Naive thymus-derived CD4-positive, alpha-beta T cell (primary cell): ENCODE measurements at regions of chr10 and their contacts with region 1.

Region 1: DNA sequence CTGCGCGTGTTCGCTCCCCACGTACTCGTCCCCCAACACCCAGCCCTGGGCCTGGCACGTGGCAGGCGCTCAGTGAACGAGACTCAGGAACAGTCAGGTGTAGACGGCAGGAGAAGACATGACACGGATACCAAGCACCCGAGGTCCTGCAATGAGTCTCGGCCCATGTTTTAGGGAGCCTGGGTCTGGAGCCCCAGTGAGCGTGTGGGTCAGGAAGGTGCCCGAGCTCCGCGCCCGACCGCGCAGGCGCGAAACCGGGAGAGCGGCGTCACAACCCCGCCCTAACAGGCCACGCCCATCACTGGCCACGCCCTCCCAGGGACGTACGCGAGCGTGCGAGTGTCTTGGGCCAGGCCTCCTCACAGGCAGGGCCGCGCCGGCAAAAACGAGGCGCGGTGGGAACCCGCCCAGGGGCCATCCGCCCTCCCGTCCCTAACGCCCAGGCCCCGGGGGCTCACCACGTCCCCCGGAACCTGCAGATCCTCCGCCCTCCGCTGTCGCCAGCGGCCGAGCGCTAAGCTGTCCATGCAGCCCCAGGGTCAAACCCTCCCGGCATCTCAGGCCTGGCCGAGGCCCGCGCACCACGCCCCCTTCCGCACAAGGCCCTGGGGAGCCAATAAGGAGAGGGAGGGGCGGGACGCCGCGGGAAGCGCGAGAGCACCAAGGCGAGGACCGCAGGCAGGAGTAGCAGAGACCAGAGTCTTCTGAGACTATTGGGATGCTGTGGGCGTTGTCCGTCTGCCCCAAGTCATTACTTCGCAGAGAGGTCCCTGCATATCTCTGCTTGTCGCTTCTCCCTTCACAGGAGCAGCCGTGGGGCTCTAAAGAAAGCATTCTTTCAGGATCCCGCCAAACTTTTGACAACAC is at the start of gene C10orf143:
- DNase-seq: peak; percentile 96 to 100 (median 99)
- ATAC-seq: peak; percentile 89
- H3K4me3 ChIP-seq: peak within 1 kb of the TSS; percentile 100
- H3K4me3 Mint-ChIP-seq: peak within 1 kb of the TSS; percentile 90 to 99 (median 98)
- H3K27ac ChIP-seq: peak within 1 kb of the TSS; percentile 88
- H3K27ac Mint-ChIP-seq: peak within 1 kb of the TSS; percentile 90 to 99 (median 98)
- H3K4me1 ChIP-seq: peaks cover 19 to 21% of the 10 kb centered on the region in 2 donors
- H3K4me1 Mint-ChIP-seq: peaks cover 27 to 67% (median 53%) of the 10 kb centered on the region in 7 donors
- H3K27me3 ChIP-seq: no peaks in the 10 kb centered on the region
- H3K27me3 Mint-ChIP-seq: no peaks in the 10 kb centered on the region
- total RNA-seq, gene C10orf143: 2.6 to 12.5 (median 10.2) TPM

Region 2: DNA sequence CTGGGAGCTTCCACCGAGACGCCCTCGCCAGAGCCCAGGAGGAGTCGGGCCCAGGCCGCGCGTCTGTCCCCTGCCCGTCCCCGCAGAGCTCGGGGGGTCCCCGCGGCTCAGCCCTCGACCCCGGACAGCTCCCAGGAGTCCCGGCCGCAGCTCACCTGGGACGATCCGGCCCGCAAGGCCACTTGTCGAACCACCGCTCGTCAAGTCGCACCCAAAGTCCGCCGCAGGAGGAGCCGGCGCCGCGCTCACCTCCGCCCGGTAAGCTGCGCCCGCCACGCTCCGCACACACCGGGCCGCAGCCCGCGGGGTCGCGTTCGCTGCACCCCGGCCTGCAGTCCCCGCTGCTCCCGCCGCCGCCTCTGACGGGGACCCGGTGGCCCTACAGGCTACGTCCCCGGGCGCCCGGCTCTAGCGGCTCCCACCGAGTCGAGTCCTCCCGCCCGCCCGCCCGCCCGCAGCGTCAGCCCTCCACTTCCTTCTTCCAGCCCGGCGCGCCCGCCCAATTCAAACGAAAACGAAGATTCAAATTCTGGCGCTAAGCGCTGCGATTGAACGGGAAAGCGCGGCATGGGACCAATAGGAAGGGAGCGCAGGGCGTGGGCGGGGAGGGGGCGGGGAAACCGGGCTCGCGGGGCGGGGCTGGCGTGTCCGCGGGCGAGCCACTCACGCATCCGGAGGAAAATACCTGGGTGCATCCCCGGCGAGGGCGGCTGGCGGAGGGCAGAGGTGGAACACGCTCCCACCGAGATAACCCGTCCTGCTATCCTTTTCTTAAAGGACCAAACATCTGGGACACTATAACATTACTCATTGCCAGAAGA is 1984.3 kb before region 1 on chr10 and contains the start of gene MKI67:
- CTCF ChIA-PET with region 1: no interaction called
- POLR2A ChIA-PET with region 1: no interaction called
- intact Hi-C with region 1: loop called in 1 of 2 experiments (anchors 2 kb)
- DNase-seq: peak; percentile 68 to 88 (median 85)
- ATAC-seq: peak; percentile 98
- H3K4me3 ChIP-seq: peak within 1 kb of the TSS; percentile 82
- H3K4me3 Mint-ChIP-seq: peak within 1 kb of the TSS; percentile 86 to 94 (median 88)
- H3K27ac ChIP-seq: peak within 1 kb of the TSS; percentile 73
- H3K27ac Mint-ChIP-seq: peak within 1 kb of the TSS in 8 of 9 donors; percentile 56 to 97 (median 71)
- H3K4me1 ChIP-seq: peaks cover 9 to 18% of the 10 kb centered on the region in 2 donors
- H3K4me1 Mint-ChIP-seq: peaks cover 6 to 44% (median 19%) of the 10 kb centered on the region in 7 donors
- H3K27me3 ChIP-seq: peaks cover 10 to 11% of the 10 kb centered on the region in 2 donors
- H3K27me3 Mint-ChIP-seq: peaks cover 7 to 37% (median 33%) of the 10 kb centered on the region in 5 donors
- total RNA-seq, gene MKI67: 0.05 to 219 (median 1.6) TPM

Region 3: DNA sequence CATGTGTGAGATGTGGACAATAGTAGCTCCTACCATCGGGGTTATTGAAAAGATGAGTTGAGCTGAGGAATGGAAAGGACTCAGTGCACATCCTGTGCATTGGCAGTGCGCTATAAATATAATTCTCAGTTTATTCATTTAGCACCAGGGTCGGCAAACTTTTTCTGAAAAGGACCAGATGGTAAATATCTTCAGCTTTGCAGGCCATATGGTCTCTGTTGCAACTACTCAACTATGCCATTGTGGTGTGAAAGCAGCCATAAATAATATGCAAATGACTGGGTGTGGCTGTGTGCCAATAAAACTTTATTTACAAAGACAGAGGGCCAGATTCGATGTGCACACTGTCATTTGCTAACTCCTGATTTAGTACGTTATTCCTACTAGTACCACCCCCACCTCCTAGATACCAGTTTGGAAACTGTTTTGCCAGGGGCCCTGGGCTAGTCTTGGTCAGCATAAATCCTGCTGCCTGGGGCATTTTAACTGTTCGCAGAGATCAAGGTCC is 1561.3 kb before region 1 on chr10:
- CTCF ChIA-PET with region 1: no interaction called
- POLR2A ChIA-PET with region 1: no interaction called
- intact Hi-C with region 1: no loop called
- DNase-seq: no peak
- ATAC-seq: no peak
- H3K4me3 ChIP-seq: no peak overlapping the region
- H3K4me3 Mint-ChIP-seq: no peak overlapping the region
- H3K27ac ChIP-seq: no peak overlapping the region
- H3K27ac Mint-ChIP-seq: no peak overlapping the region
- H3K4me1 ChIP-seq: no peaks in the 10 kb centered on the region
- H3K4me1 Mint-ChIP-seq: no peaks in the 10 kb centered on the region
- H3K27me3 ChIP-seq: no peaks in the 10 kb centered on the region
- H3K27me3 Mint-ChIP-seq: peaks cover 0 to 21% (median 4%) of the 10 kb centered on the region in 5 donors

Region 4: DNA sequence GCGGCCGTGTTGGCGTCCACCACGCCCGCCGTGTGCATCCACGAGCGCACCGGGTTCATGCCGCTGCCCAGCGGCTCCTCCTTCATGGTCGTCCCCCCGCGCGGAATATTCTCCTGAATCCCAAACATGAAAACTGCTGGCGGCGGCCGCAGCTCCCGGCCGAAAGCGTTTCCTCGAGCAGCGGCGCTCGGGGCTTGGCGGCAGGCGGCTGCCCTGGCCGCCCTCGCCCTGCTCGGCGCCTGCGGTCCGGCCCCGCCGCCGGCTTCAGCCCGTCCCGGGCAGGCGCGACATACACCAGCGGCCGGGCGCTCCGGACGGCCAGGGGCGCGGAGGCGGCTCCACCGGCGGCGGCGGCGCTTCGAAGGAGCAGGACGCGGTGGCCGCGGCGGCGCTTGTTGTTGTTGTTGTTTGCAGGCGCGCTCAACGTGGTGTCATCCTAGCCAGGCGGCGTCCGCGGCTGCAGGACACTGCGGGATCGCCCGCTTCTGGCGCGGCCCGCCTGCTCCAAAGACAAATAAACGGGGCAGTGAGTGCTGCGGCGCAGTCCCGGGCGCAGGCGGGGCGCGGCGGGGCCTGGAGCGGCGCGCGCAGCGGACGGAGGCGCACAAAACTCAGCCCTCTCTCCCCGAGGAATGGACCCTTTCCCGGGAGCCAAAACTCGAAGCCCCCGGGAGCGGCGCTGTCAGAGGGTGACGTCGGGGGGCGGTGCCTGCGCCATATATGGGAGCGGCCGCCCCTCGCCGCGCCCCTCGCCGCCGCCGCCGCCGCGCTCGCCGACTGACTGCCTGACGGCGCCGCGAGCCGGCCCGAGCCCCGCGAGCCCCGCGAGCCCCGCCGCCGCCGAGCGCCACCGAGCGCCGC is 146.6 kb before region 1 on chr10 and contains the start of gene EBF3:
- CTCF ChIA-PET with region 1: no interaction called
- POLR2A ChIA-PET with region 1: no interaction called
- intact Hi-C with region 1: loop called (anchors 1 to 5 kb)
- DNase-seq: peak in 8 of 9 donors; percentile 30 to 61 (median 54)
- ATAC-seq: peak; percentile 80
- H3K4me3 ChIP-seq: peak within 1 kb of the TSS; percentile 32
- H3K4me3 Mint-ChIP-seq: peak within 1 kb of the TSS; percentile 67 to 89 (median 77)
- H3K27ac ChIP-seq: no peak within 1 kb of the TSS
- H3K27ac Mint-ChIP-seq: peak within 1 kb of the TSS in 3 of 9 donors; percentile 45 to 76 (median 65)
- H3K4me1 ChIP-seq: peaks cover 7 to 13% of the 10 kb centered on the region in 2 donors
- H3K4me1 Mint-ChIP-seq: peaks cover 8 to 43% (median 39%) of the 10 kb centered on the region in 7 donors
- H3K27me3 ChIP-seq: peaks cover 8 to 36% of the 10 kb centered on the region in 2 donors
- H3K27me3 Mint-ChIP-seq: peaks cover 46 to 67% (median 51%) of the 10 kb centered on the region in 5 donors
- total RNA-seq, gene EBF3: not detected

Region 5: GRCh38 chr10:130027716-130028464 is 82.6 kb before region 1 on chr10:
- CTCF ChIA-PET with region 1: no interaction called
- POLR2A ChIA-PET with region 1: no interaction called
- intact Hi-C with region 1: no loop called
- DNase-seq: no peak
- ATAC-seq: no peak
- H3K4me3 ChIP-seq: no peak overlapping the region
- H3K4me3 Mint-ChIP-seq: no peak overlapping the region
- H3K27ac ChIP-seq: no peak overlapping the region
- H3K27ac Mint-ChIP-seq: no peak overlapping the region
- H3K4me1 ChIP-seq: no peaks in the 10 kb centered on the region
- H3K4me1 Mint-ChIP-seq: no peaks in the 10 kb centered on the region
- H3K27me3 ChIP-seq: no peaks in the 10 kb centered on the region
- H3K27me3 Mint-ChIP-seq: peaks cover 0 to 6% (median 4%) of the 10 kb centered on the region in 5 donors

Region 6: GRCh38 chr10:130141878-130142277 is 31.4 kb after region 1 on chr10:
- CTCF ChIA-PET with region 1: no interaction called
- POLR2A ChIA-PET with region 1: interaction called, 74 read pairs
- intact Hi-C with region 1: no loop called
- DNase-seq: no peak
- ATAC-seq: peak; percentile 44
- H3K4me3 ChIP-seq: peak overlapping the region; percentile 19
- H3K4me3 Mint-ChIP-seq: peak overlapping the region in 8 of 10 donors; percentile 3 to 69 (median 35)
- H3K27ac ChIP-seq: no peak overlapping the region
- H3K27ac Mint-ChIP-seq: peak overlapping the region in 7 of 9 donors; percentile 16 to 81 (median 57)
- H3K4me1 ChIP-seq: peaks cover 26 to 36% of the 10 kb centered on the region in 2 donors
- H3K4me1 Mint-ChIP-seq: peaks cover 43 to 80% (median 65%) of the 10 kb centered on the region in 7 donors
- H3K27me3 ChIP-seq: no peaks in the 10 kb centered on the region
- H3K27me3 Mint-ChIP-seq: no peaks in the 10 kb centered on the region

Region 7: GRCh38 chr10:130179640-130180039 is 69.2 kb after region 1 on chr10:
- CTCF ChIA-PET with region 1: interaction called, 6 read pairs
- POLR2A ChIA-PET with region 1: interaction called, 4 read pairs
- intact Hi-C with region 1: loop called (anchors 1 kb)
- DNase-seq: peak in 7 of 9 donors; percentile 39 to 70 (median 63)
- ATAC-seq: peak; percentile 82
- H3K4me3 ChIP-seq: no peak overlapping the region
- H3K4me3 Mint-ChIP-seq: no peak overlapping the region
- H3K27ac ChIP-seq: no peak overlapping the region
- H3K27ac Mint-ChIP-seq: peak overlapping the region in 3 of 9 donors; percentile 20 to 71 (median 66)
- H3K4me1 ChIP-seq: no peaks in the 10 kb centered on the region
- H3K4me1 Mint-ChIP-seq: peaks cover 0 to 20% (median 14%) of the 10 kb centered on the region in 7 donors
- H3K27me3 ChIP-seq: no peaks in the 10 kb centered on the region
- H3K27me3 Mint-ChIP-seq: no peaks in the 10 kb centered on the region

Region 8: GRCh38 chr10:131900350-131901146 is 1790.1 kb after region 1 on chr10 and contains the start of gene PPP2R2D:
- CTCF ChIA-PET with region 1: no interaction called
- POLR2A ChIA-PET with region 1: no interaction called
- intact Hi-C with region 1: loop called in 1 of 2 experiments (anchors 1 kb)
- DNase-seq: peak; percentile 95 to 99 (median 97)
- ATAC-seq: peak; percentile 90
- H3K4me3 ChIP-seq: peak within 1 kb of the TSS; percentile 64
- H3K4me3 Mint-ChIP-seq: peak within 1 kb of the TSS; percentile 90 to 95 (median 92)
- H3K27ac ChIP-seq: peak within 1 kb of the TSS; percentile 94
- H3K27ac Mint-ChIP-seq: peak within 1 kb of the TSS; percentile 86 to 97 (median 93)
- H3K4me1 ChIP-seq: peaks cover 34 to 40% of the 10 kb centered on the region in 2 donors
- H3K4me1 Mint-ChIP-seq: peaks cover 30 to 67% (median 61%) of the 10 kb centered on the region in 7 donors
- H3K27me3 ChIP-seq: no peaks in the 10 kb centered on the region
- H3K27me3 Mint-ChIP-seq: peaks cover 0 to 18% (median 0%) of the 10 kb centered on the region in 5 donors
- total RNA-seq, gene PPP2R2D: 37.1 to 61.3 (median 40.1) TPM